Dendritic cell treated with granulocyte-macrophage colony-stimulating factor and Interleukin-4, amounts not matched to agents 40 ng/mL and 50 ng/mL, for 4 days (primary cell): ENCODE measurements at regions of chr4 and their contacts with region 1.

Region 1: DNA sequence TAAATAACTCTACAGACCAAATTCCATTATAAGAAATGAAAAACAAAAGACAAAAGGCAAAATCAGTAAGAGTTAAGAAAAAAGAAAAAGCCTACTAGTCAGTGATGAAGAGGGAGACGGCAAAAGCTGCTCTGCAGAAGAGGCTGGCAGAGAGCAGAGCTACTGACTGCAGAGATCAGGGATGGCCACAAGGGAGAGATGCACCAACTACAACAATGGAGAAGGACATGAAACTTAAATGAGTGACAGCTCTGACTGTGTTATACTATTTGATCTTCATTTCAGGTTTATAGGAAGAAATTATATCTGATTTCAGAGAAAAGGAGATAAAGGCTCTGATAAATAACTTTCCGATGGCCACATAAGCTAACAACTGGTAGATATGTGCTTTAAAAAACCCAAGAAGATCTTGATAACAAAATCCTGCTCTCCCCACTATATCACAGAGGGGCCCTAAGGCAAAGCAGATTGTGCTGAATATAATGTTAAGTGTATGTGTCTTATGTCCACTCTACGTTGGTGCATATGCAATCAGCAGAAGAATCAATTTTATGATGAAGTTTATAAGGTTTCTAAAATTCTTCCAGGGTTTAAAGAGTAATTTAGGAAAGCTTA is 58.4 kb upstream of the COX18 start:
- H3K4me3 Mint-ChIP-seq: no peak overlapping the region
- H3K27ac Mint-ChIP-seq: peak overlapping the region; percentile 23
- H3K4me1 Mint-ChIP-seq: no peaks in the 10 kb centered on the region
- H3K27me3 Mint-ChIP-seq: no peaks in the 10 kb centered on the region

Region 2: DNA sequence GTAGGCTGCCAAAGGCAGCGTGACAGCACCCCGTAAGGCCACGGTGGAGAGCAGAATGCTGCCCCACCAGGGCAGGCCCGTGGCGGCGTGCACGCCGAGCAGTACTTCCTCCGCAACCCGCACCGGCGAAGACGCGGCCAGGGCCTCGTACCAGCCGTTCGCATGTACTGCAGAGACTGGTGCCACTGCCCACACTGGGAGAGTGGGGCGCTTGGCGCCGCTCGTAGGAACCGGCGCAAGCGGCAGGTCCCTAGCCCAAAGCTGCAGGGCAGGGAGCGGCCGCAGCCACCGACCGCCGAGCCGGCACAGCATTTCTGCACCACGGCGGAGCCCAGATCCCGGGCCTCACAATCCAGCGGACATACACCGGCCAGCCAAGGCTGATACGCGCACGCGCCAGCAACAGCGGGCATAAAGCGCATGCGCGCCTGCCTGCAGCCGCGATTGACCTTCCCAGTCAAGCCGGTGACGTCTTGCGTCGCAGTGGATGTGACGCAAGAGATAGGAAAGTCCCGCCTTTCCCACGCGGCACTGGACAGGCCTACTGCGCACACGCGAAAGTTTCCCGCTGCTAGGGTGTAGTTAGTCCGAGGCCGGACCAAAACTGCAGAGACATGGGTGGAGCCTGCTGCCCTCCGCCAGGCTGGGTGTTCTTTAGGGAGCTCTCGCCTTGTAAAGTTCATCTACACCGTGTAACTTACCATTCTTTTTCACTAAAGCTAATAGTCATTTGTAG is 58.4 kb before region 1 on chr4 and contains the start of gene COX18:
- intact Hi-C with region 1: loop called (anchors 10 kb)
- H3K4me3 Mint-ChIP-seq: peak within 1 kb of the TSS; percentile 93
- H3K27ac Mint-ChIP-seq: peak within 1 kb of the TSS; percentile 100
- H3K4me1 Mint-ChIP-seq: peaks cover 24% of the 10 kb centered on the region
- H3K27me3 Mint-ChIP-seq: no peaks in the 10 kb centered on the region